Activated CD8-positive, alpha-beta T cell treated with anti-CD3 and anti-CD28 coated beads for 36 hours (primary cell): ENCODE measurements at regions of chr19 and their contacts with region 1.

Region 1: DNA sequence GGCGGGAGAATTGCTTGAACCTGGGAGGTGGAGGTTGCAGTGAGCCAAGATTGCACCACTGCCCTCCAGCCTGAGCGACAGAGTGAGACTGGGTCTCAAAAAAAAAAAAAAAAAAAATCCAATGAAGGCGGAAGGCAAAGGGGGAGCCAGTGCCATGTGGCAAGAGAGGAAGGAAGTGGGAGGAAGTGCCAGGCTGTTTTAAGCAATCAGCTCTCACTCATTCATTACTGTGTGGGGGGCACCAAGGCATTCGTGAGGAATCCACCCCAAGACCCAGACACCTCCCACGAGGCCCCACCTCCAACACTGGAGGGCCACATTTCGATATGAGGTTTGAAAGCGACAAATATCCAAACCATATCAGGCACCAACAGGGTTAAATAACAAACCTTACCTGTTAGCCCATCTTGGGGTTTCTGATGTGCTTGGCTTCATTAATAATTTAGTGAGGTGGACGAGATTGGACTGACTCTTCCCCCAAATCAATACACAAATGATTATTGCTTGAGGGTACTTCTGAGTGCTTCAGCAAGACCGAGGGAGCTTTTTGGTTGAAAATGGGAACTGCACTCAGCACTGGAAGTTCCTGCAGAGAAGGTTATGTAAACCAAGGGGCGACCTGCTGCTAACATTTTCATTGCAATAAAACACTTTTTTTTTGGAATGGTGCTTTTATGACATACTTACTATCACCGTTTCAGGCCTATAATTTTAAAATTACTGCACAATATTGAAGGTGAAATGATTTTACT is 7.5 kb upstream of the LRP3 start:
- DNase-seq: peak; percentile 10
- ATAC-seq: peak; percentile 37
- H3K4me3 Mint-ChIP-seq: no peak overlapping the region
- H3K27ac Mint-ChIP-seq: no peak overlapping the region
- H3K4me1 Mint-ChIP-seq: peaks cover 11% of the 10 kb centered on the region
- H3K27me3 Mint-ChIP-seq: peaks cover 2% of the 10 kb centered on the region
- CTCF ChIP-seq: no peak

Region 2: DNA sequence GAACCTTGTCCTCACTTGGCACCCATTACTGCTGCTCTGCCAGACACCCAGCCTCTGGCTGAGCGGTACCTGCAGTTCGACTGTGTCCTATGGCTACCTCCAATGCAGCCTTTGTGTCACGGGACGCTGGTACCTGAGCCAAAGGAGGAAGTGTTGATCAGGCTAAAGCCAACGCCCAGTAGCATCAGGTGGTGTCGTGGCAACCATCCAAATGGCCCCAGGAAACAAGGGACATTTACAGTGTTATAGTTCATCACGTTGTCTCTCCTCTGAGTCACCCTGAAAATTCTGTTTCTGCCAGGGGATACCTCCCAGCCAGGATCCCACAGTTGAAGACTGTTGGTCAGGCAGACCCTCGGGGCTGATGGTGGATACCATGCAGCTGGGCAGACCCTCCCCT is 132.0 kb before region 1 on chr19:
- CTCF ChIA-PET with region 1: no interaction called
- POLR2A ChIA-PET with region 1: no interaction called
- intact Hi-C with region 1: no loop called
- DNase-seq: no peak
- ATAC-seq: no peak
- H3K4me3 Mint-ChIP-seq: no peak overlapping the region
- H3K27ac Mint-ChIP-seq: no peak overlapping the region
- H3K4me1 Mint-ChIP-seq: no peaks in the 10 kb centered on the region
- H3K27me3 Mint-ChIP-seq: peaks cover under 1% of the 10 kb centered on the region
- CTCF ChIP-seq: no peak

Region 3: GRCh38 chr19:33125929-33126388 is 60.6 kb before region 1 on chr19:
- CTCF ChIA-PET with region 1: interaction called, 32 read pairs
- POLR2A ChIA-PET with region 1: no interaction called
- intact Hi-C with region 1: no loop called
- DNase-seq: peak; percentile 72
- ATAC-seq: peak; percentile 97
- H3K4me3 Mint-ChIP-seq: no peak overlapping the region
- H3K27ac Mint-ChIP-seq: no peak overlapping the region
- H3K4me1 Mint-ChIP-seq: peaks cover 2% of the 10 kb centered on the region
- H3K27me3 Mint-ChIP-seq: no peaks in the 10 kb centered on the region
- CTCF ChIP-seq: peak; percentile 79

Region 4: GRCh38 chr19:33134571-33135041 is 52.0 kb before region 1 on chr19:
- CTCF ChIA-PET with region 1: interaction called, 26 read pairs
- POLR2A ChIA-PET with region 1: no interaction called
- intact Hi-C with region 1: no loop called
- DNase-seq: peak; percentile 89
- ATAC-seq: peak; percentile 96
- H3K4me3 Mint-ChIP-seq: peak overlapping the region; percentile 63
- H3K27ac Mint-ChIP-seq: peak overlapping the region; percentile 82
- H3K4me1 Mint-ChIP-seq: peaks cover 19% of the 10 kb centered on the region
- H3K27me3 Mint-ChIP-seq: no peaks in the 10 kb centered on the region
- CTCF ChIP-seq: no peak

Region 5: GRCh38 chr19:33143897-33144405 is 42.7 kb before region 1 on chr19:
- CTCF ChIA-PET with region 1: interaction called, 83 read pairs
- POLR2A ChIA-PET with region 1: no interaction called
- intact Hi-C with region 1: loop called (anchors 5 kb)
- DNase-seq: peak; percentile 76
- ATAC-seq: peak; percentile 100
- H3K4me3 Mint-ChIP-seq: no peak overlapping the region
- H3K27ac Mint-ChIP-seq: no peak overlapping the region
- H3K4me1 Mint-ChIP-seq: peaks cover 4% of the 10 kb centered on the region
- H3K27me3 Mint-ChIP-seq: peaks cover 3% of the 10 kb centered on the region
- CTCF ChIP-seq: peak; percentile 93

Region 6: GRCh38 chr19:33156334-33156733 is 30.3 kb before region 1 on chr19:
- CTCF ChIA-PET with region 1: interaction called, 83 read pairs
- POLR2A ChIA-PET with region 1: interaction called, 4 read pairs
- intact Hi-C with region 1: no loop called
- DNase-seq: no peak
- ATAC-seq: no peak
- H3K4me3 Mint-ChIP-seq: no peak overlapping the region
- H3K27ac Mint-ChIP-seq: no peak overlapping the region
- H3K4me1 Mint-ChIP-seq: peaks cover 25% of the 10 kb centered on the region
- H3K27me3 Mint-ChIP-seq: no peaks in the 10 kb centered on the region
- CTCF ChIP-seq: no peak

Region 7: GRCh38 chr19:33163481-33163880 is 23.1 kb before region 1 on chr19:
- CTCF ChIA-PET with region 1: interaction called, 32 read pairs
- POLR2A ChIA-PET with region 1: no interaction called
- intact Hi-C with region 1: no loop called
- DNase-seq: no peak
- ATAC-seq: no peak
- H3K4me3 Mint-ChIP-seq: no peak overlapping the region
- H3K27ac Mint-ChIP-seq: no peak overlapping the region
- H3K4me1 Mint-ChIP-seq: peaks cover 21% of the 10 kb centered on the region
- H3K27me3 Mint-ChIP-seq: no peaks in the 10 kb centered on the region
- CTCF ChIP-seq: no peak

Region 8: GRCh38 chr19:33197591-33198000 is 11.0 kb after region 1 on chr19:
- CTCF ChIA-PET with region 1: interaction called, 18 read pairs
- POLR2A ChIA-PET with region 1: no interaction called
- intact Hi-C with region 1: no loop called
- DNase-seq: no peak
- ATAC-seq: no peak
- H3K4me3 Mint-ChIP-seq: no peak overlapping the region
- H3K27ac Mint-ChIP-seq: no peak overlapping the region
- H3K4me1 Mint-ChIP-seq: peaks cover 6% of the 10 kb centered on the region
- H3K27me3 Mint-ChIP-seq: peaks cover 12% of the 10 kb centered on the region
- CTCF ChIP-seq: no peak

Region 9: DNA sequence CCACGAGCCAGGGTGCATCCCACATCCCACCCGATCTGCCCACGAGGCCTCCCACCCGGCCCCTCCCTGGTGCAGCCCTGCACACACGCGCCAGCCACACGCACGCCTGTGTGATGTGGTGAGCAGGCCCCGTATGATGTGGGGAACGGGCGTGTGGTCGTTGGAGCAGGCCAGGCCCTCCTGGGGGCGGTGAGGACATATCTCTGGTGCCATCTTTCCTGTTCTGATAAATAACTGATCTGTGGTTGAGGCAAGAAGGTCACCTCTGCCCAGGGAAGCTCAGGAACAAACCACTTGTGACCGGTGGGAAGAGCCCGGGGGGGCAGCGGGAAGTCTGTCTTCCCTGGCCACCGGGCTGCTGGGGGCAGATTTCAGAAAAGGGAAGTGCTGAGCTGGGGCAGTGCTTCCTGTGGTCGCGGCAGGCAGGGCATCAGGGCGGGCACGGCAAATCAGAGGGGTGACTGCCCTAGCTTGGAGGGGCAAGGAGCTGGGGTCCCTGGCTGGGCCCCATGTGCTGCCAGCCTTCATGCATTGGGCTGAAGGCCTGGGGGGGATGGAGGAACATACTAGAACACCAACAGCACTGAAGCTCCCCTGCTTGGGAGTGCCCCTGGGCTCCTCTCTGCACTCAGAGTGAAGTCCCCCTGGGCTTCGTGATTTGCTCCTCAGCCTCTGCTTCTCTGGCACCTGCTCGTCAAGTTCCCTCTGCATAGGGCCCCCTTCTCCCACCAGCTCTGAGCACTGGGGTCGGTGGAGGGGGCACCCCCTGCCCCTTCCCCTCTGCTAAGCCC is 74.2 kb after region 1 on chr19:
- CTCF ChIA-PET with region 1: no interaction called
- POLR2A ChIA-PET with region 1: no interaction called
- intact Hi-C with region 1: no loop called
- DNase-seq: no peak
- ATAC-seq: peak; percentile 42
- H3K4me3 Mint-ChIP-seq: no peak overlapping the region
- H3K27ac Mint-ChIP-seq: no peak overlapping the region
- H3K4me1 Mint-ChIP-seq: peaks cover 14% of the 10 kb centered on the region
- H3K27me3 Mint-ChIP-seq: peaks cover 17% of the 10 kb centered on the region
- CTCF ChIP-seq: no peak